B cell (primary cell): ENCODE measurements at regions of chr17 and their contacts with region 1.

Region 1: GRCh38 chr17:7214300-7215135 is 5.1 kb downstream of the DLG4 start:
- DNase-seq: peak; percentile 99
- ATAC-seq: peak; percentile 85
- H3K4me3 ChIP-seq: peak overlapping the region; percentile 39 to 66 (median 53)
- H3K4me3 Mint-ChIP-seq: peak overlapping the region; percentile 97
- H3K27ac ChIP-seq: peak overlapping the region; percentile 77 to 90
- H3K27ac Mint-ChIP-seq: peak overlapping the region; percentile 99
- H3K4me1 ChIP-seq: peaks cover 25 to 50% of the 10 kb centered on the region in 2 donors
- H3K4me1 Mint-ChIP-seq: peaks cover 49% of the 10 kb centered on the region
- H3K27me3 ChIP-seq: peaks cover 0 to 4% (median 0%) of the 10 kb centered on the region in 4 experiments
- H3K27me3 Mint-ChIP-seq: peaks cover 5% of the 10 kb centered on the region
- CTCF ChIP-seq: peak; percentile 44

Region 2: DNA sequence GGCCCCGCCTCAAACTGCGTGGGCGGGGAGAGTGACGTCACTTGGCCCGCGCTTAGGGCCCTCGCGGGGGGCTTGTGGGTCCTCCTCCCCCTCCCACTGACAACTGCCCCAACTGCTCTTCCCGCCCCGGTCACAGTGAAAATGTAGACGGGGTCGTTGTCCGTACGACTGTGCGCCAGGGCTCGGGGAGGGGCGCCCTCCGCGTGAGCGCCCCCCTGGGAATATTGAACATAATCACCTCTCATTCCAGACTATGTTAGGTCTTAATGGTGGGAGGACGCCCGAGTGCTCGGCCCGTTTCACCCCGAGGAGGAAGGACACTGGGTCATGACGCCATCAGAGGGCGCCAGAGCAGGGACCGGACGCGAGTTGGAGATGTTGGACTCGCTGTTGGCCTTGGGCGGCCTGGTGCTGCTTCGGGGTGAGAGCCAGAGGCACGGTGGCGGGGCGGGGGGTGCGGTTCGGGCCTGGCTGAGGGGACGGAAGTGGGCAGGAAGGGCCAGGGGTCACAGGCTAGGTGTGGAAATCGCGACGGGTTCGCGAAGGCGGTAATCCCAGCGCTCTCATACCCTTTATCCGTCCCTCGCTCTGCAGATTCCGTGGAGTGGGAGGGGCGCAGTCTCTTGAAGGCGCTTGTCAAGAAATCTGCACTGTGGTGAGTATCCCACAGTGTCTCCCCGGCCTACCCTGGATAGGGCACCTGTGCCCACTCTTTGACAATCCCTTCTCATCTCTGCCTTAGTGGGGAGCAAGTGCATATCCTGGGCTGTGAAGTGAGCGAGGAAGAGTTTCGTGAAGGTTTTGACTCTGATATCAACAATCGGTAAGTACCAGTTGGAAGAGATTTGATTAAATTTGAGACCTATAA is 37.9 kb after region 1 on chr17 and contains the start of gene ELP5:
- CTCF ChIA-PET with region 1: no interaction called
- POLR2A ChIA-PET with region 1: interaction called, 7 read pairs
- intact Hi-C with region 1: loop called (anchors 1 kb)
- DNase-seq: peak; percentile 100
- ATAC-seq: peak; percentile 64
- H3K4me3 ChIP-seq: peak within 1 kb of the TSS; percentile 69 to 90 (median 78)
- H3K4me3 Mint-ChIP-seq: peak within 1 kb of the TSS; percentile 98
- H3K27ac ChIP-seq: peak within 1 kb of the TSS; percentile 98 to 100
- H3K27ac Mint-ChIP-seq: peak within 1 kb of the TSS; percentile 100
- H3K4me1 ChIP-seq: peaks cover 30 to 33% of the 10 kb centered on the region in 2 donors
- H3K4me1 Mint-ChIP-seq: peaks cover 44% of the 10 kb centered on the region
- H3K27me3 ChIP-seq: no peaks in the 10 kb centered on the region
- H3K27me3 Mint-ChIP-seq: no peaks in the 10 kb centered on the region
- CTCF ChIP-seq: no peak
- total RNA-seq, gene ELP5: 42.2 and 48.0 TPM in 2 replicates

Region 3: GRCh38 chr17:7561028-7561575 is 346.6 kb after region 1 on chr17:
- CTCF ChIA-PET with region 1: no interaction called
- POLR2A ChIA-PET with region 1: no interaction called
- intact Hi-C with region 1: no loop called
- DNase-seq: peak; percentile 89
- ATAC-seq: peak; percentile 64
- H3K4me3 ChIP-seq: peak overlapping the region; percentile 53 to 95 (median 81)
- H3K4me3 Mint-ChIP-seq: peak overlapping the region; percentile 97
- H3K27ac ChIP-seq: peak overlapping the region; percentile 97
- H3K27ac Mint-ChIP-seq: peak overlapping the region; percentile 98
- H3K4me1 ChIP-seq: peaks cover 41 to 61% of the 10 kb centered on the region in 2 donors
- H3K4me1 Mint-ChIP-seq: peaks cover 53% of the 10 kb centered on the region
- H3K27me3 ChIP-seq: no peaks in the 10 kb centered on the region
- H3K27me3 Mint-ChIP-seq: no peaks in the 10 kb centered on the region
- CTCF ChIP-seq: peak; percentile 80